WTC11 (cell line): ENCODE measurements at regions of chr15 and their contacts with region 1.

Region 1: DNA sequence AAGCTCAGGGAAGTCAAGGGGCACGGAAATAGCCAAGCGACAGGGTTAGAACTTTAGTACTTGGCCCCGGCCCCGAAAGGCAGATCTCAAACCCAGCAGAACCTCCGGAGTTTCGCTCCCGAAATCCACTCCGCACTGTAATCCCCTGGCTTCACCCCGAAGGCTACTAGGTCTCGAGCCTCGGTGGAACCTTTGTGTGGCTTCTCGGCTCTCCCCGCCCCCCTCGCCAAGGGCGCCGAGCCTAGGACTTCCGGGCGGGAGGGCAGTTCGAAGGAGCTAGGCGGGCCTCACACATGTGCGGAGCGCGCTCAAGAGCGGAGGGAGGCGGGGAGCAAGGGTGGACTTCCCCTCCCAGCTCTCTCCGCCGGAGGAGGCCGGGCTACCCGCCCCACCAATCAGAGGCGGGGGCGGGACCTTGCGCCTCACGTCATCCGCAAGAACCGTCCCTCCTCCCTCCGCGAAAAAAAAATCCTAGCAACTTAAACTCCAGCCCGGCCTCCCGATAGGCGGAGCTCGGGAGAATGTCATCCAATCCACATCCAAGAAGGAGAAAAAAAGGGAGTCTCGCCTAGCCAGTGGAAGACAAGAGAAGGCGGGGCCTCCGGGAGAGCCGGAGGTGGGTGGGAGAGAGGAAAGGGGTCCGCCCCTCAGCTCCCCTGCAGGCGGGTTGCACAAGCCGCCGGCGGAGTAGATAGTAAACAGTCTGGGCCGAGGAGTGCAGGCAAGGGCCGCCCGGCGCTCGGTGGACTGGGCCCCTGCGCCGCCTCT is 2.4 kb upstream of the SIN3A start:
- DNase-seq: peak; percentile 97
- ATAC-seq: peak; percentile 21
- H3K4me3 Mint-ChIP-seq: peak overlapping the region; percentile 90
- H3K27ac Mint-ChIP-seq: peak overlapping the region; percentile 100
- H3K4me1 Mint-ChIP-seq: peaks cover 17% of the 10 kb centered on the region
- H3K27me3 Mint-ChIP-seq: no peaks in the 10 kb centered on the region; the same call in 1 of the 2 replicates
- CTCF ChIP-seq: no peak

Region 2: DNA sequence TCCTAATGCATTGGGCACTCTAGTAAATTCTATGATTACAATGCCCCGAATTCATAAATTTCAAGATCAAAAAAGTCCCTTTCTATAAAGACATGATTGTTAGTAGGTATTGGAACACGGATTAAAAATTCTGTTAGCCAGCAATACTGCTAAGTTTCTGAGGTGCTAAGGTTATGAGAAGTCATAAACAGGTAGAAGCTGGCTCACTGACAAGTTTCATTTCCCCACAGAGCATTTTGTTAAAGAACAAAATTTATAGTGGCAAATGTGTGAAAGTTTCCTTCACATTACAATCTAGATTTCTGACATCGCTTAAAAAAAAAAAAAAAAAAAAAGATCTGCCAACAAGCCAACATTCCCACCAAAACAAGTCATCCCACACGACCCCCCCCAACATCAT is 73.1 kb before region 1 on chr15:
- CTCF ChIA-PET with region 1: no interaction called
- POLR2A ChIA-PET with region 1: no interaction called
- DNase-seq: no peak
- ATAC-seq: no peak
- H3K4me3 Mint-ChIP-seq: no peak overlapping the region
- H3K27ac Mint-ChIP-seq: no peak overlapping the region
- H3K4me1 Mint-ChIP-seq: no peaks in the 10 kb centered on the region
- H3K27me3 Mint-ChIP-seq: no peaks in the 10 kb centered on the region
- CTCF ChIP-seq: no peak

Region 3: GRCh38 chr15:75532413-75533147 is 78.7 kb after region 1 on chr15:
- CTCF ChIA-PET with region 1: interaction called, 15 read pairs
- POLR2A ChIA-PET with region 1: interaction called, 3 read pairs
- DNase-seq: peak; percentile 33
- ATAC-seq: peak; percentile 87
- H3K4me3 Mint-ChIP-seq: no peak overlapping the region
- H3K27ac Mint-ChIP-seq: peak overlapping the region; percentile 84
- H3K4me1 Mint-ChIP-seq: peaks cover 19% of the 10 kb centered on the region
- H3K27me3 Mint-ChIP-seq: no peaks in the 10 kb centered on the region
- CTCF ChIP-seq: peak; percentile 47; the same call in 1 of the 2 replicates

Region 4: DNA sequence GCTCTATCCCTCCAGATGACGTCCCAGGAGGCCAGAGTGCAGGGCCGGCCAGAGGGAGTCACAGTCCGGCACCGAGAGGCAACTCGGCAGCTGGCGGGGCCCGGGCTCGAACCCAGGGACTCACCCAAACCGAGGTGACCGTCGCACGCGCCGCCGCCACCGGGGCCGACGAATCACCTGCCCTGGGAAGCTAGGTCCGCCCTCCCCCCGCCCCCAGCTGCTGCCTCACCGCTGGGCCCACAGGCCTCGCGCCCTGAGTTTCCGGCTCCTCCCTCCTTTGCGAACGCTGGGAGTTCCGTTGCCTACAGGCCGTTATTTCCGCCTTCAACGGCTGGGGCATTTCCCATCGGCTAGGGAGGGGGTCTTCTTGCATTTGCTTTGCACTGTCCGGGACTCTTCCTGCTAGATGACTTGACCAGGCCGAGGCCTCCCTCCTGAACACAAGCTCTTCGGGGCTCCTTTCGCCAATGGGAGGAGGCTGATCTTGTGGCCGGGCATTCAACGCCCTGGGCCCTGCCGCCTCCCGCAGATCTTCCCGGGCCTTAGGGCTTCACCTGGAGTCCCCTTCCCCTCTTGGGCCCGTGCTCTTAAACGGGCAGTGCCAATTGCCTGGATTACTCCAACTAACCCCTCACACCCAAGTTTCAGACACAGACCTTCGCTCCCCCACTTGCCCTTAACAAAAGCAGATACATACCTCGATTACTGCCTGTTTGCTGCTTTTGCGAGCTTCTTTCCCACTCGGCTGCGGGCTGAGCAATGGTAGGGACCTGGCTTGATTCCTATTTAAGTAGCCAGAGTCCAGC is 171.9 kb after region 1 on chr15 and contains the start of gene SNUPN:
- CTCF ChIA-PET with region 1: interaction called, 10 read pairs
- POLR2A ChIA-PET with region 1: interaction called, 18 read pairs
- DNase-seq: peak; percentile 96
- ATAC-seq: peak; percentile 88
- H3K4me3 Mint-ChIP-seq: peak within 1 kb of the TSS; percentile 91
- H3K27ac Mint-ChIP-seq: peak within 1 kb of the TSS; percentile 98
- H3K4me1 Mint-ChIP-seq: peaks cover 12% of the 10 kb centered on the region
- H3K27me3 Mint-ChIP-seq: no peaks in the 10 kb centered on the region
- CTCF ChIP-seq: no peak
- total RNA-seq, gene SNUPN: 25.9 to 28.4 TPM (median 27.9 TPM) in 3 replicates

Region 5: DNA sequence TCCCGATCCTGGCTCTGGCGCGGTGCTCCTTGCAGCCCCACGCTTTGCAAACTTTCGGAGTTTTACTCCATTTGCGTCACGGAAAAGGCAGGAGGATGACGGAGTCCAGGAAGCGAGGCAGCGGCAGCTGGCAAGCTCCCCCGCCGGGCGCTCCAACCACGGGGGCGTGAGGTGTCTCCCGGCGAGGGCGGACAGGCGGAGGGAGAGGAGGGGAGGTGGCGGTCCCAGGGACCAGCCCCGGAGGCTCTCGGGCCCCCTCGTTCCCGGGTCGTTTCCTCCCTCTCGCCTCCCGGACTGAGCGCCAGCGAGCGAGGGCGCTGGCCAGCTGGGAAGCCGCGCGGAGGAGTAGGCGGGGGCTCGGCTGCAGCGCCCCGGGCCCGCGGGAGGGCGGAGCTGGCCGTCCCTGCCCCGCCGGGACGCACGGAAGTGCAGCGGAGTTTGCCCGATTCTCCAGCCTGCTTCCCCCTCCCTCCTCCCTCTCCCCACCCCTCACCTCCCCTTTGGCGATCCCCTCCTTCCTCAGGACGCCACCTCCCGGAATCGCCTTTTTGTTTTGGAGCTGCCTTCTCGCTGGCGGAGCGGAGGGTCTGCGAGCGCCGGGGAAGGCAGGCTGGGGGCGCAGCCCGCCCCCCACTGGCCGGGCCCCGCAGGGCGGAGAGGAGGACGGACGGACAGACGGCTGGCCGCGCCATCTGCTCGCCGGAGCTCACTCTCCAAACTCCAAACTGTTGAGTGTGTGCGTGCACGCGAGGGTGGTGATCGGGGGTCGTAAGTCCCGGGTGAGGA is 193.7 kb after region 1 on chr15 and contains the start of gene SNX33:
- CTCF ChIA-PET with region 1: interaction called, 14 read pairs
- POLR2A ChIA-PET with region 1: interaction called, 76 read pairs
- DNase-seq: peak; percentile 79
- ATAC-seq: peak; percentile 71
- H3K4me3 Mint-ChIP-seq: peak within 1 kb of the TSS; percentile 91
- H3K27ac Mint-ChIP-seq: peak within 1 kb of the TSS; percentile 98
- H3K4me1 Mint-ChIP-seq: peaks cover 51% of the 10 kb centered on the region
- H3K27me3 Mint-ChIP-seq: peaks cover 23% of the 10 kb centered on the region
- CTCF ChIP-seq: no peak; the same call in 1 of the 2 replicates
- total RNA-seq, gene SNX33: 17.8 to 19.8 TPM (median 18.9 TPM) in 3 replicates